ENCODE measurements at regions of chr17 and their contacts with region 1.

Region 1: GRCh38 chr17:7851438-7852256 is 3.2 kb upstream of the TMEM88 start:
- DNase-seq: peak; percentile 90
- H3K4me3 ChIP-seq: no peak overlapping the region
- H3K27ac ChIP-seq: no peak overlapping the region
- H3K4me1 ChIP-seq: peaks cover 10% of the 10 kb centered on the region
- H3K27me3 ChIP-seq: no peaks in the 10 kb centered on the region
- CTCF ChIP-seq: peak; percentile 92

Region 2: DNA sequence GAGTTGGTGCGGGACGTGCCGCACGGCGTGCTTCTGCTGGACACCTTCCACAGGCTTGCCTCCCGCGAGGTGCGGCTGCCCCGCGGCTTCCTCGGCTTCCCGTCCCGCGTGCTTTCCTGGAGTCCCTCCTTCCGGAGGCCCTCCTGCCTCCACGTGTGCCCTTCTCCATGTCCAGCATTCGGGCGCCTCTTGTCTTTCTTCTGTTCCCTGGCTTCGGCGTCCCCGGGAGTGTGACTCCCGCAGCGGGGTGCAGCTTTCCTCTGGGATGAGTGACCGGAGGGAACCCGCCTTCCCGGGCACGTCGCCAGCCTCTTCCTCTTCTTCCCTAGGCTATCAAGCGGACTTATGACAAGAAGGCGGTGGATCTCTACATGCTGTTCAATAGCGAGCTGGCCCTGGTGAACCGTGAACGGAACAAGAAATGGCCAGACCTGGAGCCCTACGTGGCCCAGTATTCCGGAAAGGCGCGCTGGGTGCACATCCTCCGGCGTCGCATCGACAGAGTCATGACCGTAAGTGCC is 111.1 kb before region 1 on chr17:
- CTCF ChIA-PET with region 1: interaction called, 8 read pairs
- POLR2A ChIA-PET with region 1: no interaction called
- intact Hi-C with region 1: loop called (anchors 2 kb)
- DNase-seq: peak; percentile 26
- H3K4me3 ChIP-seq: peak overlapping the region; percentile 9
- H3K27ac ChIP-seq: no peak overlapping the region
- H3K4me1 ChIP-seq: peaks cover 3% of the 10 kb centered on the region
- H3K27me3 ChIP-seq: peaks cover 8% of the 10 kb centered on the region
- CTCF ChIP-seq: no peak

Region 3: DNA sequence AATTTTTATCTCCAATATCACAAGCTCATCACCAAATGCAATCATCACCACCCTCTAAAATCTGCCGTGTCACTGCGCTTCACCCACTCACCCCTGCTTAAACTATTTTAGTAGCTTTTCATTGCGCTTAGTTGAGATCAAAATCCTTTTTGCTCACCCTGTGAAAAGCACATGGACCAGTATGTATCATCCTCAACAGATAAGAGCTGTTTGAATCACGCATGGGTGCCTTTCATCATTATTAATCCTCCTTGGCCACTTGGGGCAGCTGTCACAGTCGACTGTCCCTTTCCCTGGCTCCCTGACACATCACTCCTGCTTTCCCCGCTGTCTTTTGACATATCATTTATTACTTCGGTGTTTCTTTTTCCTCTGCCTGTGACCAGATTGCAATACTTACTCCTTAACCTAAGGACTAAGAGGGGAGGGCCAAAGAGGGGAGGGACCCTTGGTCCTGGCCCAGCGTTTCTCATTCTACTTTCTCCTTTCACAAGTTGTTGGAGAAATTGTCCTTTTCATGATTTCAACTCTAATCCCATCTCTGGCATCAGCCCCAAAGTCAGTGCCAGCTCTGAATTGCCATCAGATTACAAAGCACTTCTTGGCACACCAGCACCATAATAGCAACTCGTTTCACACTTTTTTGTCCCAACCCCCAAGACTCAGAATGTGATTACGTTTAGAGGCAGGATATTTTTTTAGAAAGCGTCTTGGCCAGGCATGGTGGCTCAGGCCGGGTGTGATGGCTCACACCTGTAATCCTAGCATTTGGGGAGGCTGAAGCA is 26.2 kb before region 1 on chr17:
- CTCF ChIA-PET with region 1: no interaction called
- POLR2A ChIA-PET with region 1: no interaction called
- intact Hi-C with region 1: loop called (anchors 1 kb)
- DNase-seq: peak; percentile 57
- H3K4me3 ChIP-seq: no peak overlapping the region
- H3K27ac ChIP-seq: no peak overlapping the region
- H3K4me1 ChIP-seq: peaks cover 15% of the 10 kb centered on the region
- H3K27me3 ChIP-seq: no peaks in the 10 kb centered on the region
- CTCF ChIP-seq: peak; percentile 42

Region 4: GRCh38 chr17:7834962-7835813 is 16.5 kb before region 1 on chr17:
- CTCF ChIA-PET with region 1: interaction called, 4 read pairs
- POLR2A ChIA-PET with region 1: interaction called, 3 read pairs
- intact Hi-C with region 1: loop called (anchors 1 kb)
- DNase-seq: peak; percentile 100
- H3K4me3 ChIP-seq: peak overlapping the region; percentile 75
- H3K27ac ChIP-seq: peak overlapping the region; percentile 97
- H3K4me1 ChIP-seq: peaks cover 31% of the 10 kb centered on the region
- H3K27me3 ChIP-seq: no peaks in the 10 kb centered on the region
- CTCF ChIP-seq: peak; percentile 89

Region 5: DNA sequence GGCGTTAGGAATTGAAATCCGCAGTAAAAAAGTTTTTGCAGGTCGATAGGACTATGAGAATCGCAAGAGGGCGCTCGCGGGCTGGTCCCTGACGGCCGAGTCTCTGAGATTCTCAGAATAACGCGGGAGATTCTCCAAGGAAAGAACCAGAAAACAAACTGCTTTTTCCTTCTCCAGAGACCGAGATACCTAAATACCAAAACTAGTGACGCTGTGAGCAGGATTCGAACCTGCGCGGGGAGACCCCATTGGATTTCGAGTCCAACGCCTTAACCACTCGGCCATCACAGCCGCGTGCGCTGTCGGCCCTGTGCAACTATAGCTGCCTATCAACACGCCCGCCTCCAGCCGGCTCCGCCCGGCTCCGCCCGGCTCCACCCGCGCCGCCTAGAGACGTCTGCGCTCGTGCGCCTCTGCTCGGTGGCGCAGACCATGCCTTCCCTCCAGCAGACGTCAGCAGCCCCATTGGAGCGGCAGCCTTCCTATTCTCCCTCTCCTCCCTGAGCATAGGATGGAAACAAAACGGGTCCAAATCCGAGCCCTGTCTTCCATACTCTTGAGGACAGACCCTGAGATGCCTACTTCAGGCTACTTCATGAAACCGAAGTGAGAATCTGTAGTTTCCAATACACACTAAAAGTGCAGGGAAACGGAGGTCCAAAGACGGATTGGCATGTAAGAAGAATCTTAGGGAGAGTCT is 287.2 kb after region 1 on chr17:
- CTCF ChIA-PET with region 1: no interaction called
- POLR2A ChIA-PET with region 1: no interaction called
- intact Hi-C with region 1: no loop called
- DNase-seq: peak; percentile 99
- H3K4me3 ChIP-seq: peak overlapping the region; percentile 55
- H3K27ac ChIP-seq: peak overlapping the region; percentile 87
- H3K4me1 ChIP-seq: no peaks in the 10 kb centered on the region
- H3K27me3 ChIP-seq: no peaks in the 10 kb centered on the region
- CTCF ChIP-seq: peak; percentile 91